BJ (cell line): ENCODE measurements at regions of chr9 and their contacts with region 1.

Region 1: DNA sequence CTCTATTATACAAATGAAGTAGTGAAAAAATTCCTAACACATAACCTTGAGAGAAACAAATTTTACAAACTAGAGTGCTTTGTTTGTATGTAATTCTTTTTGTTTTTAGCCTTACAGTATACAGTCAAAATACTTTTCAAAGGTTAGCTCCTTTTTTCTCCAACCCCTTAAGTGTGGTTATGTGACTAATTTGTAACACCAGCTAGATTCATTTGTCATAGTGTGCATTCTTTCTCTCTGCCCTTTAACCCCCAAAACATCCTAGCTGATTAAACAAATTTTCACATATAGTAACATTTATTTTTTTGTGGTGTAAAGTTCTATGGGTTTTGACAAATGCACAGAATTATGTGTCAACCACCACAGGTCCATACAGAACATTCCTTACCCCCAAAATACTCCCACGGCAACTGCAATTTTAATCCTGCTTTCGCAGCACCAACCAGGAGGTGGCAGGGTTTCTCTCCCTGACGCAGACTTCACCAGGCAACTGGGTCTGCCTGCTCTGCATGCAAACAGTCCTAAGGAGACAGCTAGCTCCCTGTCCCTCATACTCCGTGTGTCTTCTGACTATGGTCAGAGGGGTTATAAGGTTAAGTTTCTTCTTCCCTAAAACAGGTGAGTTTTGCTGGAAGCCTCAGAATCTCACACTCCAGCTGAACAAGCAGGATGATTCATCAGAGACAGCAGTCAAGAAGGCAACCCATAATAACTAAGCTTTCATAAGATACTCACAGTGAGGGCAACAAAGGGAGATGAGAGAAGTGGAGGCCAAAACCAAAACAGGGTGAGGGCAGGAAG is 44.5 kb upstream of the NR5A1 start:
- DNase-seq: no peak
- H3K4me3 ChIP-seq: no peak overlapping the region
- H3K27me3 ChIP-seq: 0 out of 2 replicates have a peak, but pooled peaks cover 3% of the 10 kb centered on the region
- CTCF ChIP-seq: peak; percentile 86

Region 2: DNA sequence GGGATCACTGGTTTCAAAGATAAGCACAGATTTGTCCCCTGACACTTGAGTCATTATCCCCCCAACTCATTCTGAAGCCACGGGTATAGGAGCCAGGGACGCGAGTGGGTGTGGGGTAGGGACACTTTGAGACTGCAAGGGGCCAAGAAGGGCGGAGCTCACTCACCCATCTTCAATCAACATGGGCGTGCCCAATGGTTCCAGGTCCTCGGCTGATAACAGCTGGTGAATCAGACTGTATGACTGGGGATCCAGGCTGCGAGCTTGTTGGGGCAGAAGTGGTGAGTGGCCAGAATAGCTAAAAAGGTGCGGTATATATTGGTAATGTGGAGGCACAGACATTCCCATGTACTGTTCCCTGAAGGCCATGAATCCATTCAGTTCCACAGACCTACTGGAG is 13.7 kb before region 1 on chr9:
- CTCF ChIA-PET with region 1: interaction called, 32 read pairs
- POLR2A ChIA-PET with region 1: no interaction called
- DNase-seq: no peak
- H3K4me3 ChIP-seq: no peak overlapping the region
- H3K27me3 ChIP-seq: peaks cover 4% of the 10 kb centered on the region
- CTCF ChIP-seq: no peak

Region 3: GRCh38 chr9:124562328-124562727 is 10.7 kb after region 1 on chr9:
- CTCF ChIA-PET with region 1: interaction called, 18 read pairs
- POLR2A ChIA-PET with region 1: no interaction called
- DNase-seq: no peak
- H3K4me3 ChIP-seq: no peak overlapping the region
- H3K27me3 ChIP-seq: no peaks in the 10 kb centered on the region
- CTCF ChIP-seq: no peak

Region 4: DNA sequence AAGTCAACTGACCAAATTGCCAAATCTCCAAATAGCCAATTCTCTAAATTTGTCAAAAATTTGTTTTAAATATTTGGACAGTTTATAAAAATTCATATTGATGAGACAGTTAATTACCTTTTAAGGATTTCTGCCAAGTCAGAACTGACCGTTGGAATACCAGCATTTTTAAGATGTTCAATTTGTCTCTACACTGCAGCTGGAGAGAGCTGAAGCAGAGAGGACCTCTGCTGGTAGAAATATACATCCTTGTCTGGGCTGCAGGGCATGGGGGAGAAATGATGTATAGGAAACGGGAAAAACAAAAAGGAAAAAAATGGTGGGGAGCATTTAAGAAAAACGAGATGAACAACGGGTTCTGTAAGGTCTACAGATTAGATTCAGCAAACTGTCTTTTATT is 202.6 kb after region 1 on chr9:
- CTCF ChIA-PET with region 1: interaction called, 12 read pairs
- POLR2A ChIA-PET with region 1: no interaction called
- DNase-seq: no peak
- H3K4me3 ChIP-seq: no peak overlapping the region
- H3K27me3 ChIP-seq: peaks cover 2% of the 10 kb centered on the region
- CTCF ChIP-seq: peak; percentile 72